HEK293T (cell line): ENCODE measurements at regions of chr19 and their contacts with region 1.

Region 1: GRCh38 chr19:39435499-39436349 is at the start of gene RPS16:
- DNase-seq: peak; percentile 96

Region 2: DNA sequence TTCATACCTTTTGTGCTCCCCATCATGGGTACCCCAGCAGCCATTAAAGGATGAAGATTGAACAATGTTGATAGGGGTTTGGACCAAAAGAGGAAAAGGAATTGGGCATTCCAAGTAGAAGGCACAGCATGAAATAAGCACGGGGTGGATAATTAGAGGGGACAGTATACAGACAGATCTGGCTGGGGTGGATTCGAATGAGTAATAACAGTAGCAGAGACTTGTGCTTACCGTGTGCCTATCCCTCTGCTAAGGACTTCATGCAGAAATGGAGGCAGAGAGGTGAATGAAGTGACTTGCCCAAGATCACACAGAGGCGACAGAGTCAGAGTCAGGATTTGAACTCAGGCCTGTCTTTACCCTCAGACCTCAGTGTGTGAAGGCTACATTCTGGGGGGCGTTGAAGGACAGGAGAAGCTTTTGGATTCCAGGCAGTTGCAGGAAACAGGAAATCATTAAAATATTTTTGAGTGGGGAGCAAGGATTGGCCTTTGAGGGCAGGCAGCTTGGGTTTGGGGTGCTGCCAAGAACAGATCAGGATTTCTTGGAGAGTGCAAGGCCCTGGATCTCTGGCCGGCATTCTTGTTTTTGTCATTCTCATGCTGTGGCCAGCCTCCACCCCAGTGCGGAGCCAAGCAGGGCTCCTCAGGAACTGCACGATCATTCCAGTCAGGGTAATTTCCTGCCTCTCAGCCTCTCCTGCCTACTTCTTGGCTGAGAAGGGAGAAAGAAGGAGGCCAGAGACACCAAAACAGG is 63.5 kb before region 1 on chr19:
- CTCF ChIA-PET with region 1: no interaction called
- POLR2A ChIA-PET with region 1: no interaction called
- DNase-seq: no peak

Region 3: GRCh38 chr19:39390755-39391592 is 44.8 kb before region 1 on chr19 and contains the starts of genes MED29 and PAF1:
- CTCF ChIA-PET with region 1: no interaction called
- POLR2A ChIA-PET with region 1: interaction called, 30 read pairs
- DNase-seq: peak; percentile 98

Region 4: GRCh38 chr19:39412100-39412866 is 23.4 kb before region 1 on chr19 and contains the start of gene PLEKHG2:
- CTCF ChIA-PET with region 1: interaction called, 4 read pairs
- POLR2A ChIA-PET with region 1: interaction called, 78 read pairs
- DNase-seq: peak; percentile 95

Region 5: DNA sequence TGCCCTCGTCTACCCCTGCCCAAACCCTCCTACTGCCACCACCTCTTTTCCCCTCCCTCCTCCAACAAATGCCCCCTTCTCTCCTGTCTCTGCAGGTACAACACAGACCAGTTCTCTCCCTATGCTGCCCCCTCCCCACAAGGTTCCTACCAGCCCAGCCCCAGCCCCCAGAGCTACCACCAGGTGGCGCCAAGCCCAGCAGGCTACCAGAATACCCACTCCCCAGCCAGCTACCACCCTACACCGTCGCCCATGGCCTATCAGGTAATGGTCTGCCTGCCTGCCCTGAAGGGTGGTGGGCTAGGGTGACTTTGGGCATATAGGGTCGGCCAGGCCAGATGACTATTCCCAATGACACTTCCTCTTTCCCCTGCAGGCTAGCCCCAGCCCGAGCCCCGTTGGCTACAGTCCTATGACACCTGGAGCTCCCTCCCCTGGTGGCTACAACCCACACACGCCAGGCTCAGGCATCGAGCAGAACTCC is 38.5 kb after region 1 on chr19:
- CTCF ChIA-PET with region 1: interaction called, 7 read pairs
- POLR2A ChIA-PET with region 1: interaction called, 12 read pairs
- DNase-seq: peak; percentile 82

Region 6: DNA sequence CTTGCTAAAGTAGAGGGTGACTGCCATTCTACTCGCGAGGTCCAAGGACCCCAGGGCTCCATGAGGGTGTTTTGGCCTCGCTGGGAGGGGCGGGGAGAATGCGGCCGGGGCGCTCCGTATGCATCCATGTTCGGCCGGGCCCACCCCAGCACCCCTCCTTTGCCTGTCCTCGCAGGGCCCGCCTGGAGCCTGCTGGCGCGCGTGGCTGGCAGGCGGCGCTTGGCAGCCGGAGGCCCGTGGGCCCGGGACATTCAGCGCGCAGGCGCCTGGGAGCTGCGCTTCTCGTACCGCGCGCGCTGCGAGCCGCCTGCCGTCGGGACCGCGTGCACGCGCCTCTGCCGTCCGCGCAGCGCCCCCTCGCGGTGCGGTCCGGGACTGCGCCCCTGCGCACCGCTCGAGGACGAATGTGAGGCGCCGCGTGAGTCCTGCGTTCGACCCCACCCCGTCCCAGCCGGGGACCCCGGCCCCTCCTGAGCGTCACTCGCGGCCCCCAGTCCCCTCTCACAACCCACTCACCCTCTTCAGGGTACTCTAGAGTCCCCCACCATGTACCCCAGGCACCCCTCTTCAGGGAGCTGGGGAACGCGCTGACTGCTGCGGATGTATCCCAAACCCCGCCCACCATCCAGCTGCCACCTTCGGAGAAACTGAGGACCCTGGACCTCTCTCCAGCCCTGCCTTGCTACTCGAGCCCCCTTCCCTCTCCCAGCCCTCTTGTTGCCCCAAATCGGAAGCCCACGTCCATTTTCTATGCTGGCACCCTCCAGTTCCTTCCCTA is 67.1 kb after region 1 on chr19:
- CTCF ChIA-PET with region 1: interaction called, 3 read pairs
- POLR2A ChIA-PET with region 1: interaction called, 34 read pairs
- DNase-seq: peak; percentile 91

Region 7: GRCh38 chr19:39539519-39540332 is 104.0 kb after region 1 on chr19 and contains the start of gene EID2:
- CTCF ChIA-PET with region 1: no interaction called
- POLR2A ChIA-PET with region 1: interaction called, 25 read pairs
- DNase-seq: peak; percentile 98

Region 8: GRCh38 chr19:39563408-39563807 is 127.7 kb after region 1 on chr19:
- CTCF ChIA-PET with region 1: no interaction called
- POLR2A ChIA-PET with region 1: no interaction called
- DNase-seq: no peak